AG04450 (cell line): ENCODE measurements at regions of chr1 and their contacts with region 1.

Region 1: GRCh38 chr1:224851210-224851847 is 78.1 kb upstream of the DNAH14 start:
- DNase-seq: no peak
- H3K4me3 ChIP-seq: no peak overlapping the region
- H3K27ac ChIP-seq: no peak overlapping the region
- H3K27me3 ChIP-seq: no peaks in the 10 kb centered on the region
- CTCF ChIP-seq: peak; percentile 82

Region 2: GRCh38 chr1:224579526-224579925 is 271.8 kb before region 1 on chr1:
- CTCF ChIA-PET with region 1: no interaction called
- POLR2A ChIA-PET with region 1: no interaction called
- DNase-seq: peak; percentile 26
- H3K4me3 ChIP-seq: no peak overlapping the region
- H3K27ac ChIP-seq: peak overlapping the region; percentile 12
- H3K27me3 ChIP-seq: no peaks in the 10 kb centered on the region
- CTCF ChIP-seq: no peak

Region 3: DNA sequence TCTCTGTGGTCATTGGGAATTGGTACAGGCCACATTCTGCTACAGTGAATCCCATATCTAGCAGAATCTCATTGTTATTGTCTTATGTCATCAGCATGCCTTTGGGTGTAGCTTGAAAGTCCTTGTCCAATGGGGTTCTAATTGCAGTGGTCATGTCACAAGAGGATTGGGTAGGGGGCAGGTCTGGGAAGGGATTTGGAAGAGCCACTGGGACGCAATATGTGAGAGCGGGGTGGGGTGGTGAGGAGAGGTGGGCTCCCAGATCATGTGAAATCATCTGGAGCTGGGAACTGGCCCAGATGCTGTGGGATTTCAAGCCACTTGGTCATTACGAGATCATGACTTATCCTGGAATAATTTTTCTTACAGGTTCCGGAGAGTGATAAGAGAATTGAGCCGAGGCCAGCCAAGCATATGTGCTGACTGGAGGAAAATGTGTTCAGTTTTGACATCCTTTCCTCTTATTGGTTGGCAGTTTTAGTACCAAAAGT is 218.9 kb before region 1 on chr1:
- CTCF ChIA-PET with region 1: interaction called, 16 read pairs
- POLR2A ChIA-PET with region 1: no interaction called
- DNase-seq: peak; percentile 59
- H3K4me3 ChIP-seq: no peak overlapping the region
- H3K27ac ChIP-seq: peak overlapping the region; percentile 80
- H3K27me3 ChIP-seq: no peaks in the 10 kb centered on the region
- CTCF ChIP-seq: no peak

Region 4: DNA sequence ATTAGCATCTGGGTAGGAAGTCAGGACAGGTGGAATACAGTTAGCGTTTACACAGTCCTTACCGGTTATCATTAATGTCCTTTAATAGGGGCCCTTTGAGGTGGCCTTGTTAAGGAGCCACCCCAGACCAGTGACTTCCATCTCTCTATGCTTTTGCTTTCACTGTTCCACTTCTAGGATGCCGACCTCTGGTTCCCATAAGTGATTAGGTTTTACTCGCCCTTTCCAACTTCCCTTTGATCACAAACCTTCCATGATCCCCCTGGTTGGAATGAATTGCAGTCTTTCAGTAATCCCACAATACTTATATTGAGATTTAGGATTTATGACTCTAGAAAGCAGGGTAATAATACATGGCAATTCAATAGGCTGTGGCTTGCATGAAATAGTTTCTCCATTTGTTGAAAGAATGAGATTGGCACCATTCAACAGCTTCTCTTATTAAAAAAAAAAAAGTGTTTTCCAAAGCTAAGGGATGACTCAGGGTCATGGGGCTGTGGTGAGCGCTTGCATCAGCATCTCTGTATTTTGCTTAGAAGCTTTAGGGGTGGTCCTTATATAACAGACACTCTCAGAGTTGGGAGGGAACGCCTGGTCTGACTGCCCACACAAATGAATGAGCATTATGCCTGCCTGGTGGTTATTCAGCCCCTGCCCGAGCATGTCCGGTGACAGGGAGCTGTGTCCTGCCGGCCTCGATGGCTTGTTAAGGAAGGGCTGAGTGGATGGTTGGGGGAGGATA is 124.7 kb before region 1 on chr1:
- CTCF ChIA-PET with region 1: interaction called, 17 read pairs
- POLR2A ChIA-PET with region 1: no interaction called
- DNase-seq: peak; percentile 85
- H3K4me3 ChIP-seq: no peak overlapping the region
- H3K27ac ChIP-seq: peak overlapping the region; percentile 76
- H3K27me3 ChIP-seq: no peaks in the 10 kb centered on the region
- CTCF ChIP-seq: no peak

Region 5: GRCh38 chr1:224863970-224864369 is 12.6 kb after region 1 on chr1:
- CTCF ChIA-PET with region 1: interaction called, 52 read pairs
- POLR2A ChIA-PET with region 1: no interaction called
- DNase-seq: no peak
- H3K4me3 ChIP-seq: no peak overlapping the region
- H3K27ac ChIP-seq: no peak overlapping the region
- H3K27me3 ChIP-seq: peaks cover 8% of the 10 kb centered on the region
- CTCF ChIP-seq: no peak

Region 6: DNA sequence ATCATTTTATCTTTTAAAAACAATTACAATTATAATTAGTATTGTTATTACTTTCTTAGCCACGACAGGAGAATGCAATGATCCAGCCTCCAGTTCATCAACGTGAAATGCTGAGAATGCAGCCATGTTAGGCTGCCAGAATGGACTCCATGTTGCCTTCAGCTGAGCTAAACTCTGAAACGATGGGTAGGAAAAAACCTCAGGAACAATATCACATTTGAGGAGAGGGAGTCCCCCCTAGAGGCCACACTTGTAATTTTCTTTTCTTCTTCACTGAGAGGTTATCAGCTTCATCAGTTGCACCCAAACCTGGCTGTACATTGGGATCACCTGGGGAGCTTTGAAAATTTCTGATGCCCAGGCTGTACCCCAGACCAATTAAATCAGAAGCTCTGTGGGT is 43.6 kb after region 1 on chr1:
- CTCF ChIA-PET with region 1: interaction called, 22 read pairs
- POLR2A ChIA-PET with region 1: no interaction called
- DNase-seq: peak; percentile 10
- H3K4me3 ChIP-seq: no peak overlapping the region
- H3K27ac ChIP-seq: no peak overlapping the region
- H3K27me3 ChIP-seq: peaks cover 2% of the 10 kb centered on the region
- CTCF ChIP-seq: peak; percentile 57